ENCODE measurements at regions of chr10 and their contacts with region 1.

Region 1: GRCh38 chr10:126663328-126663727 is 7.2 kb downstream of the C10orf90 start:
- DNase-seq: peak; percentile 21 to 96 (median 89)
- H3K4me3 ChIP-seq: peak overlapping the region in 31 of 59 donors; percentile 0 to 86 (median 27)
- H3K27ac ChIP-seq: peak overlapping the region; percentile 73 to 99 (median 97)
- H3K27me3 ChIP-seq: peaks cover 0 to 4% (median 0%) of the 10 kb centered on the region in 45 donors
- CTCF ChIP-seq: peak in 14 of 56 donors; percentile 5 to 33 (median 22)

Region 2: DNA sequence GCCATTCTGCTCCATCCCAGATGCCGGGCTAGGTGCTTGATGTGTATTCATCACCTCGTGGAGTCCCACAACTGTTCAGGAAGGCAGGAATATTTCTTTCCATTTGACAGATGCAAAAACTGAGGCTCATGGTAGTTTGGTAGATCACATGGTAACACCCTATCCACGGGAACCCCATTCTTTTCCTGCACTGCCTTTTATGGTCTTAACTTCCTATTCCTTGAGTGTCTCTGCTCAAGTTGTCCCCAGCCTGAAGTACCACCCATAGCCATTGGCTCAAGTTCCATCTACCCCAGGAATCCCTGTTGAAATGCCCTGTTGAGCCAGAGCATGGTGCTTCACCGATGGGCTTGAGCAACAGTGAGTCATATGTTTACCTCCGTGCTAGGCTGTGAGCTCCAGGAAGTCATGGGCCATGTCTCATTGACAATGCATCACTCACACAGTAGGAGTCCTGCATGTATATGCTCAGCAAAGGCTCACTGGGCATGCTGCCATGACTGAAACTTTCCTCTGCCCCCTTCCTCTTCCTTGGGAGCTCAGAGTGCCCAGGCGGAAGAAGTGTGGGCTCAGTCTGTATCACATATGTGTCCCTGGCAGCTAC is 203.3 kb before region 1 on chr10:
- intact Hi-C with region 1: loop called in 1 of 2 experiments (anchors 10 kb)
- DNase-seq: peak in 1 of 10 donors; percentile 55
- H3K4me3 ChIP-seq: no peak overlapping the region
- H3K27ac ChIP-seq: peak overlapping the region in 17 of 59 donors; percentile 0 to 62 (median 39)
- H3K27me3 ChIP-seq: peaks cover 0 to 4% (median 0%) of the 10 kb centered on the region in 45 donors
- CTCF ChIP-seq: no peak

Region 3: DNA sequence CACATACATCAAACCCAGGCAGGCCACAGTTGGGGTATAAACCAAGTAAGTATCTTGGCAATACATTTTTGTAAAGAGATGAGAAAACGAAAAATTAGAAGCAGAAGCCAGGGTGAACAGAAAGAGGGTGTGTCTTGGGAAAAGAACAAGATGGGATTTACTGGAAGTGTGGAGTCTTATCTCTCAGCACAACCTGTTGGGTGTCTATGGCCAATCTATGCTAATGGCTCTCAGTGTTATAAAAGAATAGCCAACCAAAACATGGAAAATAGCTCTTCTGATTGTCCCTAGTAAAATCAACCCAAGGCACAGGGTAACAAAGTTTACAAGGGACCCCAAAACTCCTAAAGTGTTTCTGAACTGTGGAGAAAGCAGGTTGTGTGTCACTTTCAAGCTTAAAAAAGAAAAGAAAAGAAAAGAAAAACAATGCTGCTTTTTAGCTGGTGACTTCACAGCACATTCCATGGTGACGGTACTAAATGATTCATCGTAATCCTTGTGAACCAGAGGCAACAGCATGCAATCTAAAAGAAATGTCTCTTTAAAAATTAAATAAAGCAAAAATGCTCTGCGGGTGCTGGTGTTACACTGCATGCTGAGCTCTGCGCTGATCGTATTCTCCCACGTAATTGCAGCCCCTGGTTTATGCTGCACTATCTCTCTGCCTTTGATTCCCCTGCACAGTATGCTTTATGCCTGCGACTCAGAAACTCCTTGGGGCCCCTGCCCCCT is 93.6 kb before region 1 on chr10:
- intact Hi-C with region 1: loop called (anchors 5 to 10 kb)
- DNase-seq: no peak
- H3K4me3 ChIP-seq: peak overlapping the region in 42 of 59 donors; percentile 1 to 46 (median 23)
- H3K27ac ChIP-seq: peak overlapping the region in 57 of 59 donors; percentile 8 to 90 (median 71)
- H3K27me3 ChIP-seq: no peaks in the 10 kb centered on the region
- CTCF ChIP-seq: no peak

Region 4: DNA sequence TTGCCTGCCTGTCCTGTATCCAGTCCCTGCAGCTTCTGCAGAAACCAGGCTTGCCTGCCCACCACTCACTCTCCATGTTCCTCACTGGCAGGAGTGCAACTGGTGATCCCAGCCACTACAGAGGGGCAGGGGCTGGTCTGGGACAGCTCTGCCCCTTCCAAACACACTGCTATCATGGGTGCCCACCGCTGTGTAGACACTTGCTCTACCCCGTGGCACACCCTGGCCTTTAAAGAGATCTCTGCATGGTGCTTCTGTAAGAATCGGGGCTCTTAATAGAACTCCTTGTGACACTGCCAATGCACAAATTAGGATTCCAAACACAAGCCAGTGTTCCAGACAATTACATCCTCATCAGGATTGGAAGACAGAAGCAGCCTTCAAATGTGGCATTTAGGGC is 34.6 kb before region 1 on chr10:
- intact Hi-C with region 1: loop called in 1 of 2 experiments (anchors 5 kb)
- DNase-seq: peak in 6 of 10 donors; percentile 10 to 59 (median 46)
- H3K4me3 ChIP-seq: peak overlapping the region in 19 of 59 donors; percentile 7 to 45 (median 23)
- H3K27ac ChIP-seq: peak overlapping the region; percentile 15 to 95 (median 82)
- H3K27me3 ChIP-seq: no peaks in the 10 kb centered on the region
- CTCF ChIP-seq: peak in 1 of 56 donors; percentile 24

Region 5: DNA sequence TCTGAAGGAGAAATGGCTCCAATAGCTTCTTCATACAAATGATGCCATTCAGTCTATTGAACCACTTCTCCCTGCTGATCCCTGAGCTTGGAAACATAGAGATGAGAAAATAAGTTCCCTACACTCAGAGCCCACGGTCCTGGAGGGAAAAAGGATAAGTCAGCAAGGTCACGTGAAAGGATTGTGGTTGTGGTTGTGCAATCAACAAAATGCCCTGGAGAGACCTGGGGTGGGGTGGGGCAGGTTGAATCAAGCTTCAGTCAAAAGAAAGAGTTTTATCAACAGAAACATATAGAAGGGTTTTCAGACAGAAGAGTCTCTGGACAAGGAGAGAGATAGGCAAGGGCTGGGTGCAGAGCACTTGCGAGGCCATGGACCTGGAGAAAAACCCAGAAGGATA is 22.9 kb before region 1 on chr10:
- intact Hi-C with region 1: no loop called
- DNase-seq: no peak
- H3K4me3 ChIP-seq: no peak overlapping the region
- H3K27ac ChIP-seq: peak overlapping the region in 31 of 59 donors; percentile 0 to 89 (median 50)
- H3K27me3 ChIP-seq: no peaks in the 10 kb centered on the region
- CTCF ChIP-seq: no peak

Region 6: GRCh38 chr10:126687121-126687606 is 23.8 kb after region 1 on chr10:
- intact Hi-C with region 1: no loop called
- DNase-seq: no peak
- H3K4me3 ChIP-seq: peak overlapping the region in 15 of 59 donors; percentile 3 to 38 (median 18)
- H3K27ac ChIP-seq: peak overlapping the region in 51 of 59 donors; percentile 22 to 80 (median 61)
- H3K27me3 ChIP-seq: no peaks in the 10 kb centered on the region
- CTCF ChIP-seq: no peak

Region 7: GRCh38 chr10:126749015-126749655 is 85.8 kb after region 1 on chr10:
- intact Hi-C with region 1: loop called in 1 of 2 experiments (anchors 10 kb)
- DNase-seq: peak; percentile 14 to 94 (median 82)
- H3K4me3 ChIP-seq: no peak overlapping the region
- H3K27ac ChIP-seq: peak overlapping the region in 42 of 59 donors; percentile 4 to 83 (median 56)
- H3K27me3 ChIP-seq: no peaks in the 10 kb centered on the region
- CTCF ChIP-seq: peak; percentile 47 to 93 (median 78)

Region 8: DNA sequence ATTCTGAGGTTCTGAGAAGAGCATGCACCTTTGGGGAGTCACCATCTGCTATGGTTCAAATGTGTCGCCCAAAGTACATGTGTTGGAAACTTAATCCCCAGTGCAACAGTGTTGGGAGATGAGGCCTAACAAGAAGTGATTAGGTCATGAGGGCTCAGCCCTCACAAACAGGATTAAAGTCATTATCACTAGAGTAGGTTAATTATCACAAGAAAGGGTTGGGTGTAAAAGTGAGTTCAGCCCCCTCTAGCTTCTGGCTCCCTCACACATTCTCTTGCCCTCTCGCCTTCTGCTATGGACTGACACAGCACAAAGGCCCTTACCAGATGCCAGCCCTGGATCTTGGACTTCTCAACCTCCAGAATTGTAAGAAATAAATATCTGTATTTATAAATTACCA is 107.5 kb after region 1 on chr10:
- intact Hi-C with region 1: no loop called
- DNase-seq: no peak
- H3K4me3 ChIP-seq: no peak overlapping the region
- H3K27ac ChIP-seq: no peak overlapping the region
- H3K27me3 ChIP-seq: peaks cover 0 to 2% (median 0%) of the 10 kb centered on the region in 45 donors
- CTCF ChIP-seq: no peak

Region 9: DNA sequence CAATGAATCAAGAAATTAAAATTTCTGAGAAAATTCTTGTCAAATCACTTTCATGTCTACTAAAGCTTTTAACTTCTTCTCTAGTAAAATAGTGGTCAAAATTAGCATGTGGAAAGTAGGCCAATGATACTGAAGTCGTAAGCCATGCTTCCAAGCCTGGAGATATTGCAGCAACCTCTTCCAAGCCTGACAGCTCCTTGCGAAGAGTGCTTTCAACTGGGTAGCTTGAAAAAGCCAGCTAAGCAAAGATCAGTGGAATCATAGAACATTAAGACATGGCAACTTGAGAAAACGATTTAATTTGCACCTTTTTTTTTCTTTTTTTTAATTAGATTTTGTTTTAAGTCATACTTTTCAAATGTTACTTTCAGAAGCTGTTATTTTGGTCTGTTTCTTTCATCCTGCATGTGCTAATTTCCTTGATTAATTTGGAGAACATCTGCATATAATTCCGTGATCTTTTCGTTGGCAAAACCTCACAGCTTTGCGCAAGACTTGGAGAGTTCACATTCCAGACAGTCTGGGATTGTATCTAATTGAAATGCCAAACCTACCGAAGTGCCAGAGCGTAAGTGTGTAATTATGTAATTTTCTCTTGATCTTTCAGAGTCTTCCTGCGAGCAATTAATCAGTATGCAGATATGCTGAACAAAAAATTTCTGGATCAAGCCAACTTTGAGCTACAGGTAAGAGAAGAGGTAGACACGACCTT is 675.2 kb after region 1 on chr10:
- intact Hi-C with region 1: no loop called
- DNase-seq: no peak
- H3K4me3 ChIP-seq: no peak overlapping the region
- H3K27ac ChIP-seq: no peak overlapping the region
- H3K27me3 ChIP-seq: no peaks in the 10 kb centered on the region
- CTCF ChIP-seq: no peak